Sigmoid colon (tissue), 7 donors: ENCODE measurements at regions of chr2 and their contacts with region 1.

Region 1: DNA sequence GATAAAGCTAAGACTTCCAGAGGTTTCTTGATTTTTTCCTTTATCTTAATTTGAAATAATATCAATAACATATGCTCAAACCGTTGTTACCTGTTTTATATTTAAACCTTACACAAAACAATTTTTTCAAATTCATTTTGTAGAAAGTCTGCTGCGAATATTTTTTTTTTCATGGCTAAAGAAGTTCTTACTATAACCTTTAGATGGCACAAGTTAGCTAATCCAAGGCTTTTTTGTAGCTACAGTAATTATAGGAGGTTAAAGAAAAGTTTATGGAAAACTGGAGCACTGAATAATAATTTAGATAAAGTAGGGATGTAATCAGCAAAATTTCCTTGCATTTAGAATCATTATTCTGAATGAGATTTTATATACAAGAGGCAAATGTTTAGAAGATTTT is 78.0 kb upstream of the PNPT1 start:
- DNase-seq: no peak
- H3K4me3 ChIP-seq: no peak overlapping the region
- H3K27ac ChIP-seq: no peak overlapping the region
- H3K4me1 ChIP-seq: no peaks in the 10 kb centered on the region
- H3K27me3 ChIP-seq: no peaks in the 10 kb centered on the region
- CTCF ChIP-seq: peak in 2 of 4 experiments; percentile 5 to 45
- EP300 ChIP-seq: no peak
- POLR2A ChIP-seq: no peak

Region 2: DNA sequence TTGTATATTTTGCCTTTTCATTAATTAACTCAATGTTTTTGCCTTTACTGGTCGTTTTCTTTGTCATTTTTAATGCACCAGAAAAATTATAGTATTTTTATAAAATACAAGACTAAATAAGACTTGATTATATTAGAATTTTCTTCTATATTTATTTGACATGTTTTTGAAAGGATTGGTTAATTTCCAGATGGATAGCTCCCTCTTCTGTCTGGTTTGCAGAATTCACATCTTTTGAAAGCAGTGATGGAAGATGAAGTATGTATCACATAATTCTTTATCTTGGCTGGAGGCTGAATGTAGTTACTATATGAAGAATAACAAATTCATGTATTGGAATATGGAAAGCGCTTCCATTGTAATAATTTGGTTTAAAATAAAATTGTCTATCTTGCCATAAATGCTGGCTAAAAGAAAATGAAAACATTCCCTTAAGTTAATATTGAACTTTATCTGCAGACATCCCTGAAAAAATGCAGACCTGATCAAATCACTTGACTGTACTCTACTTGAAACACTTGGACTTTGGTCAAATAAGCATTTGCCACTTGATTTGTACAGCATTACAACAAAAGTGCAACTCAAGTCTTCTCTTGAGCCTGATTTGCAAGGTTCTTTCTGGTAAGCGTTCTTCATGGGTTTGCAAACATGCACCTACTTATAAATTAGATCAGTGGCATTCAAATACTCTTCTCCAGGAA is 238.3 kb after region 1 on chr2:
- intact Hi-C with region 1: loop called (anchors 10 kb)
- DNase-seq: no peak
- H3K4me3 ChIP-seq: no peak overlapping the region
- H3K27ac ChIP-seq: no peak overlapping the region
- H3K4me1 ChIP-seq: no peaks in the 10 kb centered on the region
- H3K27me3 ChIP-seq: no peaks in the 10 kb centered on the region
- CTCF ChIP-seq: peak in 1 of 4 experiments; percentile 32
- EP300 ChIP-seq: no peak
- POLR2A ChIP-seq: no peak